ENCODE measurements at regions of chr2 and their contacts with region 1.

Region 1: GRCh38 chr2:8004250-8004681 is 677.6 kb upstream of the ID2 start:
- DNase-seq: no peak
- ATAC-seq: peak; percentile 84
- H3K4me3 ChIP-seq: no peak overlapping the region
- H3K27ac ChIP-seq: no peak overlapping the region
- H3K4me1 ChIP-seq: no peaks in the 10 kb centered on the region
- H3K27me3 ChIP-seq: no peaks in the 10 kb centered on the region

Region 2: DNA sequence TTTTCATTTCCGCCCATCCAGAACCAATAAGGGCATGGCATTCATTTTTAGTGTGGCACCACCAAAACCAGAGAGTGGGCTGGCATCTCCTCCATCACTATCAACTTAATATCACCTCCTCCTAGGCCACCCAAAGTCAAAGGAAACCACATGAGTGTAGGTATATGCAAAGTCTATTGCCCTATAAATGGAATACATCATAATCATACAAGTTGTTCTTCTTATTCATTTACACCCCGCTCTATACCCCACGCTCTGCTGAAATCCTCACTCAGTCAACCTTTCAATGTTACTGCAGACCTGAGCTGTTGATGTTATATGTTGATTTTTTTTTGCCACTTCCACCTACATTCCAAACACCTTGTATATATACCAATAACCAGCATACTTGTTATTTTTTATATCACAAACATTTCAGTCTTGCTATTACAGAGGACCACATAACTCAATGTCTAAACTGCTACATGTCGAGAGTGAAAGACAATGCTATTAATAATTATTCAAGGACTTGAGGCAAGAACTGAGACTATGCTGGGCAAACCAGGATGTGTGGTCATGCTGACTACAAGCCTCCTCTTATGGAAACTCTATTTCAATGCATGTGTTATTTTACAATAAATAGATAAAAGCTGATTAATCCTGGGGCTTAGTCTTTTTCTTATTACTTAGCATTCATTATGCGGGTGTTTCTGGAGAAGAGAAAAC is 211.0 kb after region 1 on chr2:
- intact Hi-C with region 1: loop called in 1 of 2 experiments (anchors 10 kb)
- DNase-seq: no peak
- ATAC-seq: no peak
- H3K4me3 ChIP-seq: no peak overlapping the region
- H3K27ac ChIP-seq: no peak overlapping the region
- H3K4me1 ChIP-seq: peaks cover 0 to 1% of the 10 kb centered on the region in 2 donors
- H3K27me3 ChIP-seq: no peaks in the 10 kb centered on the region

Region 3: DNA sequence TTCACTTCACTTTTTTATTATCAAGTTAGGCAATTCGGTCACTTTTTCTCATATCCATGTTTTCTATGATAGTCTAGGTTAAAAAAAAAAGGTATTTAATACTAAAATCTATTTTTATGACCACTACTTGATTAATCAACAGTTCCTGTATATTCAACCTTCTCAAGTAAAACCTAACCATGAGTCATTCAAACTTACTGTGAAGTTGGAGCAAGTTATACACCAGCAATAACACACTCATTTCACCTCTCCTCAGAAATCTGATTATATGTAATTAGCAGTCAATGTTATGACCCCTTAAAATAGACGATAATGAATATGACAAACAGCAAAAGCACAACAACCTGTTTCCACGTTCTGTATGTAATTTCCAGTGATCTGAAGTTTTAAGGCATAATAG is 1586.4 kb after region 1 on chr2:
- intact Hi-C with region 1: no loop called
- DNase-seq: no peak
- ATAC-seq: no peak
- H3K4me3 ChIP-seq: no peak overlapping the region
- H3K27ac ChIP-seq: no peak overlapping the region
- H3K4me1 ChIP-seq: peaks cover 2 to 3% of the 10 kb centered on the region in 2 donors
- H3K27me3 ChIP-seq: no peaks in the 10 kb centered on the region